BJ (cell line): ENCODE measurements at regions of chr14 and their contacts with region 1.

Region 1: DNA sequence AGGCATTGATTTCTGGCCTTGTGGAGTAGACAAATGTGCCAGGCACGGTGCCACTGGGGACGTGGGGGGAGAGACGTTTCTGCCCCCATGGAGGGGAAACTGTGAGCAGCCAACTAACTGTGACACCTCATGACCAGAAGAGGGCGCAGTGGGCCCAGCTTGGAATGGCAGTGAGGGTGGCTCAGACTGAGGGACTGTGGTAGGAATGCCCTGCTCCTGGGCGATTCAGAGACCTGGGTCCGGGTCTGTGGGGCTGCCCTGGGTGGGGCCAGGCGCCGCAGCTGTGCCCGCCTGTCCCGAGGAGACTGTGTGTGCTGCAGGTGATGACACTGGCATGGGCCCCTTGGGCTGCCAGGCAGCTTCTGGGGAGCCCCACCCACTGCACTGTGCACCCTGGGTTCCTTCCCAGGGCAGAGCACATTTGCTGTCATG is 60.6 kb downstream of the SLC25A47 start:
- DNase-seq: no peak
- H3K4me3 ChIP-seq: no peak overlapping the region
- H3K27me3 ChIP-seq: no peaks in the 10 kb centered on the region
- CTCF ChIP-seq: peak; percentile 87

Region 2: DNA sequence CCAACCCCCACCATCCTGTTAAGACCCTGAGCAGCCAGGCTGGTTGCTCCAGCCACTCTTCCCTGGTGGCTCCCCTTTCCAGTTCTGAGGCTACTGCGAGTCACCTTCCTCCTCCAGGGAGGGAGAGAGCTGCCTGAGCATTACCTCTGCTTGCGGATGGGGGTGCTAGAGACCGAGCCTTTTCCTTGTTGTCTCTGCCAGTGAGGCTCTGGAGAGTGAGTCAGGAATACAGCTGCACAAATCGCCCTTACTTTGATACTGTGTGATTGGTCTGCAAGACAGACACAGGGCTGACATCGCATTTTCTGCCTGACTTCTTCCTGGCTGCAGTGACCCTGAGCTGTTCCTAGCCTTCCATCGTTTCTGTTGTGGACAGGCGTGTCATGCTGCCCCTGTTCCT is 33.7 kb after region 1 on chr14:
- CTCF ChIA-PET with region 1: interaction called, 19 read pairs
- POLR2A ChIA-PET with region 1: no interaction called
- DNase-seq: peak; percentile 66
- H3K4me3 ChIP-seq: no peak overlapping the region
- H3K27me3 ChIP-seq: no peaks in the 10 kb centered on the region
- CTCF ChIP-seq: peak; percentile 94

Region 3: GRCh38 chr14:100471441-100472093 is 87.8 kb after region 1 on chr14:
- CTCF ChIA-PET with region 1: no interaction called
- POLR2A ChIA-PET with region 1: no interaction called
- DNase-seq: no peak
- H3K4me3 ChIP-seq: no peak overlapping the region
- H3K27me3 ChIP-seq: no peaks in the 10 kb centered on the region
- CTCF ChIP-seq: no peak

Region 4: GRCh38 chr14:100571837-100572236 is 188.1 kb after region 1 on chr14:
- CTCF ChIA-PET with region 1: no interaction called
- POLR2A ChIA-PET with region 1: no interaction called
- DNase-seq: no peak
- H3K4me3 ChIP-seq: no peak overlapping the region
- H3K27me3 ChIP-seq: peaks cover 34% of the 10 kb centered on the region
- CTCF ChIP-seq: no peak

Region 5: DNA sequence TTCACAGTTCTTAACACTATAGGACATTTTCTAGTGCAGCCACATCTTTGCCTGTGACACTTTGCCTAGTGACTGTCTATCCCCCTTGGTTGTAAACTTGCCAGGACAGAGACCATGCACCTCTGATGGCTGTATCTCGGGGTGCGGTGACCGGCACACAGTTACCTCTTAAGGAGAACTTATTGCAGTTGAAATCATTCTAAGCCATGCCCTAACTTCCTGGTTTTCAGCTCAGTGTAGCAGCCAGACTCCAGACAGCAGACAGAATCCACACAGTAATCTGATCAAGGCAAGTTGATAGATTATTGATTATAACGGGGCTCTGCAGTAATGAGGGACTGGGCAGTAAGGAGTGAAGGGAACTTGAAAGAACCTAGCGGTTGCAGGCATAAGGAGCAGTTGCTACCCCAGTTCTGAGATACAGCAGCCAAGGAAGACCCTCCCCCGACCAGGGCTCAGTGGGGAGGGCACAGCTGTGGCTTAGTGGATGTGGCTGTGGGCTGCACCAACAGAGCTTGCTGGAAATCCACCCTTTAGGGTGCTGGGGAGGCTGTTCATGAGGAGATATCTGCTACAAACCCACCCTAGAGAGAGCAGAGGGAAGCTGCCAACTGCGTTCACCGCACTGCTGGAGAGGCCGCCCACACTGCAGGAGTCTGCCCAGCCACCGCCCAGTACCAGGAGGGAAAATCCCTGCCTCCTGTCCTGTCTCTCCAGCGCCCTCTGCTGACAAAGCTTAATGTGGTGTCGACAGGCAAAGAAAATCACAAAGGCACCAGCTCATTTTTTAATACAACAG is 261.6 kb after region 1 on chr14:
- CTCF ChIA-PET with region 1: interaction called, 123 read pairs
- POLR2A ChIA-PET with region 1: interaction called, 3 read pairs
- DNase-seq: no peak
- H3K4me3 ChIP-seq: no peak overlapping the region
- H3K27me3 ChIP-seq: peaks cover 6% of the 10 kb centered on the region; the same call in 1 of the 2 replicates
- CTCF ChIP-seq: peak; percentile 81

Region 6: DNA sequence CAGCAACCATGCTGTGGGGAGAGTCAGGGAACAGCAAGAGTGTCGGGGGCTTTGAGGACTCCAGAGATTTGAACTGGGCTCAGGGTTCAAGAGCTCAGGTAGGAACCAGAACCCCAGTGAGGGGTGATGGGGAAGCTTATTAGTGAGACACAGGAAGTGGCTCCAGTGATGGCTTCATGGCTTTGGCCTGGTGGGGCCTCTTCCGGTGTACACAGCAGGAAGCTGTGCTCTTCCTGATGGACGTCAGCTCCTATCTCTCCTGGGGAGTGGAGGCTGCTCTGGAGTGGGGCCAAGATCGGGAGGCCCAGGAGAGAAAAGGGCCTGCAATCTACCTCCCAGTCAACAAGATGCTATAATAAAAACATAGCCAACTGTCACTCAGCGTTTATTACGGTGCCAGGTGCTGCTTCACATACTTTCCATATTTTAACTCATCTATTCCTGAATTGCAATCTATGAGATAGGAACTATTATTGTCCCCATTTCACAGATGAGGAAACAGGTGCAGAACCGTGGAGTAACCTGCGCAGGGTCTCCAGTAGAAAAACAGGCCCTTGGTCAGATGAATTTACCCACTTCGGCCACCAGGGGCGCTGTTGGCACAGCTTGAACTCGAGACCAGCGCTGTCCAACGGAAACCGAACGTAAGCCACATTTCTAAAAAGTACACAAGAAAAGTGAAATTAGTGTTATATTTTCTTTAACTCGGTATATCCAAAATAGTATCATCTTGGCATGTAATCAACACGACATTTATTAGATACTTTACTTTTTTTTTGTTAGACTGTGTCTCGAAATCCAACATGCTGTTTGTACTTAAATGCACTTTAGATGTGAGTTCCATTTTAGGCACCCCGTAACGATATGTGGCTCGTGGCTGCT is 279.4 kb after region 1 on chr14:
- CTCF ChIA-PET with region 1: interaction called, 109 read pairs
- POLR2A ChIA-PET with region 1: no interaction called
- DNase-seq: no peak
- H3K4me3 ChIP-seq: no peak overlapping the region
- H3K27me3 ChIP-seq: peaks cover 26% of the 10 kb centered on the region
- CTCF ChIP-seq: peak; percentile 89

Region 7: GRCh38 chr14:101628471-101628966 is 1244.8 kb after region 1 on chr14:
- CTCF ChIA-PET with region 1: interaction called, 39 read pairs
- POLR2A ChIA-PET with region 1: no interaction called
- DNase-seq: no peak
- H3K4me3 ChIP-seq: peak overlapping the region; percentile 9; the same call in 1 of the 2 replicates
- H3K27me3 ChIP-seq: no peaks in the 10 kb centered on the region; the same call in 1 of the 2 replicates
- CTCF ChIP-seq: peak; percentile 74